Endothelial cell of umbilical vein (primary cell): ENCODE measurements at regions of chr10 and their contacts with region 1.

Region 1: GRCh38 chr10:60827791-60828488 is 49.7 kb downstream of the CDK1 start:
- DNase-seq: peak; percentile 98
- H3K4me3 ChIP-seq: peak overlapping the region in 1 of 3 experiments; percentile 39
- H3K27ac ChIP-seq: peak overlapping the region; percentile 98
- H3K4me1 ChIP-seq: peaks cover 32% of the 10 kb centered on the region
- H3K27me3 ChIP-seq: no peaks in the 10 kb centered on the region
- CTCF ChIP-seq: no peak
- POLR2A ChIP-seq: no peak

Region 2: DNA sequence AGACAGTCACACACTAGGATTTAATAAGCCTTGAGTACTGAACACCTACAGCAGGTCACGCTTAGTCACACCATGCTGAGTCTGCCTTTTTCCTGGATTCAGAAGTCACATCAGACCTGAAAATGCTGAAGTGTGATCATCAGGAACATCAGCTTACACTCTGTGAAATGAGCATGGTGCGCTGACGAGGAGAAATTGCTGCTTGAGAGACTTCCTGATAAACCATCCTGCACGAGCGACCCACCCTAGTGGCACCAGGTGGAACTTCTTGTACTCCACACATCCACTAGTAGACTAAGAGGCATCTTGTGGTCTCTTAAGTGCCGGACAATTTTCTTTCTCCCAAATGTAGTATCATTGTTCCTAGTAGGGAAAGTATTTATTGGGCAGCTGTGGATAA is 1022.9 kb before region 1 on chr10:
- CTCF ChIA-PET with region 1: no interaction called
- POLR2A ChIA-PET with region 1: no interaction called
- dilution Hi-C with region 1: no loop called
- intact Hi-C with region 1: no loop called
- DNase-seq: no peak
- H3K4me3 ChIP-seq: no peak overlapping the region
- H3K27ac ChIP-seq: no peak overlapping the region
- H3K4me1 ChIP-seq: no peaks in the 10 kb centered on the region
- H3K27me3 ChIP-seq: no peaks in the 10 kb centered on the region
- CTCF ChIP-seq: peak; percentile 38 to 40
- POLR2A ChIP-seq: no peak

Region 3: DNA sequence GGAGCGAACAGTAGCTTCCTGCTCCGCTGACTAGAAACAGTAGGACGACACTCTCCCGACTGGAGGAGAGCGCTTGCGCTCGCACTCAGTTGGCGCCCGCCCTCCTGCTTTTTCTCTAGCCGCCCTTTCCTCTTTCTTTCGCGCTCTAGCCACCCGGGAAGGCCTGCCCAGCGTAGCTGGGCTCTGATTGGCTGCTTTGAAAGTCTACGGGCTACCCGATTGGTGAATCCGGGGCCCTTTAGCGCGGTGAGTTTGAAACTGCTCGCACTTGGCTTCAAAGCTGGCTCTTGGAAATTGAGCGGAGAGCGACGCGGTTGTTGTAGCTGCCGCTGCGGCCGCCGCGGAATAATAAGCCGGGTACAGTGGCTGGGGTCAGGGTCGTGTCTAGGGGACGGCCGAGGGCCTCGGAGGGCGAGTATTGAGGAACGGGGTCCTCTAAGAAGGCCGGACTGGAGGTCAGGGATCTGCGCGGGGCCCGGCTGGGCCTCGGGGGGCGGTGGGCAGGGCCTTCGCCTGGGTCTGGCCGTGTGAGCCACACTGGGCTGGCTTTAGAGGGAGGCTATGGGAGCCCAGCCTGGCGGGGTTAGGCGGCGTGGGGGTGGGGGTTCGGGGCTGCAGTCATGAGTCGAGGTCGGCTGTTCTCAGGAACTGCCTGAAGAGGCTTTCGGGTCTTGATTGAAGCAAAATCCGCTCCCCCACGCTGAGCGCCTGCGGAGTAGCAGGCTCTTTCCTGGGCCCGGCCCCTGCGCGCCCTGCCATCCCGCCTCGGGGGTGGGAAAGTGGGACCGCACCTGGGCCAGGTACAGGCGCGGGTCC is 49.5 kb before region 1 on chr10 and contains the start of gene CDK1:
- CTCF ChIA-PET with region 1: no interaction called
- POLR2A ChIA-PET with region 1: no interaction called
- dilution Hi-C with region 1: no loop called
- intact Hi-C with region 1: loop called (anchors 1 kb)
- DNase-seq: peak; percentile 98
- H3K4me3 ChIP-seq: peak within 1 kb of the TSS; percentile 91 to 98 (median 92)
- H3K27ac ChIP-seq: peak within 1 kb of the TSS; percentile 64
- H3K4me1 ChIP-seq: peaks cover 37% of the 10 kb centered on the region
- H3K27me3 ChIP-seq: no peaks in the 10 kb centered on the region
- CTCF ChIP-seq: no peak
- POLR2A ChIP-seq: peak; percentile 75
- total RNA-seq, gene CDK1: 70.1 and 71.6 TPM in 2 replicates

Region 4: DNA sequence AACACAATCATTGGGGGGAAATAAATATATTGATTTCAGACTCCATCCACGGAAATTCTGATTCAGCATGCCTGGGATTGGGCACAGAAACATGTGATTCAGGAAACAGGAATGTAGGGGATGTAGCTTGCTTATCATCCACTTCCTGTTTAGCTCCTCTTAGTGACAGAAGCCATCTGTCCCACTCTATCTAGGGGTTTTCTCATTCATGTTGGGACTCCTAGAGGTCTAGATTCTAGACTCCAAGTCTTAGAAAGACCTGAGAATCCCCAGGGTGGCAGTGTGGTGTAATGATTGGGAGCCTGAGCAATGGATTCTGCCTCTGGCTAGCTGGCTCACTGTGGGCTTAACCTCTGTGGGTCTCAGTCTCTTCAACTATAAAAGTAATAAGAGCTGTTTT is 18.2 kb after region 1 on chr10:
- CTCF ChIA-PET with region 1: interaction called, 3 read pairs
- POLR2A ChIA-PET with region 1: no interaction called
- dilution Hi-C with region 1: no loop called
- intact Hi-C with region 1: loop called (anchors 1 kb)
- DNase-seq: peak; percentile 27
- H3K4me3 ChIP-seq: no peak overlapping the region
- H3K27ac ChIP-seq: peak overlapping the region; percentile 30
- H3K4me1 ChIP-seq: peaks cover 11% of the 10 kb centered on the region
- H3K27me3 ChIP-seq: no peaks in the 10 kb centered on the region
- CTCF ChIP-seq: no peak
- POLR2A ChIP-seq: no peak

Region 5: DNA sequence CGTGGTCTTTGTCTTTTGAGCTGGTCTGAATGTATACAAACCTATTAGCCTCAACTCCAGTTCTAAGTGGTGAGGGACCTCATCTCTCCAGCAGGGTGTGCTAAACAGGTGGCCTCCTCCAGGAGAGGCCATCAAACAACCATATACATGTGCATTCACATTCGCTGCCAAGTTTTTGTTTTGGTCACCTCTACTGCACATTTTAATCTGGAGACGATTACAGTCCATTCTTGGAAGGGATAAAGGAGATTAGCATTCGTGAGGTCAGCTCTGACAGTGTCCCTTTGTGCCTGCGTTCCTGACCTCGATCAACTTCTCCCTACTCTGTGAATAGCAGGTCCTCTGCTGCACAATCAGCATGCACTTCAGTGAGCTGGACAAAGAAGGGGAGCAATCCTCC is 55.2 kb after region 1 on chr10:
- CTCF ChIA-PET with region 1: interaction called, 3 read pairs
- POLR2A ChIA-PET with region 1: no interaction called
- dilution Hi-C with region 1: no loop called
- intact Hi-C with region 1: loop called (anchors 2 kb)
- DNase-seq: peak; percentile 61
- H3K4me3 ChIP-seq: no peak overlapping the region
- H3K27ac ChIP-seq: no peak overlapping the region
- H3K4me1 ChIP-seq: no peaks in the 10 kb centered on the region
- H3K27me3 ChIP-seq: no peaks in the 10 kb centered on the region
- CTCF ChIP-seq: peak; percentile 41 to 64
- POLR2A ChIP-seq: no peak

Region 6: GRCh38 chr10:60944159-60944909 is 116.4 kb after region 1 on chr10 and contains the start of gene RHOBTB1:
- CTCF ChIA-PET with region 1: no interaction called
- POLR2A ChIA-PET with region 1: interaction called, 3 read pairs
- dilution Hi-C with region 1: no loop called
- intact Hi-C with region 1: loop called (anchors 1 kb)
- DNase-seq: peak; percentile 85
- H3K4me3 ChIP-seq: peak within 1 kb of the TSS; percentile 74 to 91 (median 86)
- H3K27ac ChIP-seq: peak within 1 kb of the TSS; percentile 98
- H3K4me1 ChIP-seq: peaks cover 18% of the 10 kb centered on the region
- H3K27me3 ChIP-seq: no peaks in the 10 kb centered on the region
- CTCF ChIP-seq: no peak
- POLR2A ChIP-seq: peak; percentile 71
- total RNA-seq, gene RHOBTB1: 31.0 and 31.3 TPM in 2 replicates

Region 7: DNA sequence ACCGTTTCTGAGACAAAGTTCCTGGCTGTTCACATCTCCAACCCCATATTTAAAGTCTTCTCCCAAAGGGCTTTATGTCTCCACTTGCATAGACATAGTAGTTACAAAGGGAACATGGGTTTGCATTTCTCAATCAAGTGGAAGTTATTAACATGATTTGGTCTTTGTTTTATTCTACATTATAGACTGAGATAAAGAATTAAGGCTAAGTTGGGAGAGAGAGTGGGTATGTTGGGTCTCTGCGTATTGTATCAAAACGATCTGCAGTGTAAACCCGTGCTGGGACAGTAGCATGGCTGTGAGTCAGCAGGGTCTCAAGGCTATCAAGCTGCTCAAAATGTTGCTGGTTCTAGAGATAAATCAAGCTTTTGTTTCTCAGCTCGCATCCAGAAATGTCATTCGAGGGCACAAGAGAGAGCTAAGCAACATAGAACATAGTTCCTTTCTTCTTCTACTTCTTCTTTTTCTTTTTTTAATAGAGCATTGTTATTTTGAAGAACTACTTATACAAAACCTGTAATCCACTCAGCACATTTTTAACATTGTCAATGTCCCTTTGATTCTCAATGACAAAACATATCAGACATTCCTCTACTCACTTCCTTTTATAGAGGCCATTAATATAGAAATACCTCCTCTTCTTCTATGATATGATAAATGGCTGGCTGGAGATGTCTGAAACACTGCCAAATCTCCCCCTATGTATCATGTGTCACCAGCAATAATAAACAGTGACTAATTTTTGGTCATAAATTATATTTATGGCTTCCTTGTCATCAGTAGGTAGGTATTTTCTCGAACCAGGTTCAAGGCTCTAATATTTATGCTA is 150.6 kb after region 1 on chr10:
- CTCF ChIA-PET with region 1: no interaction called
- POLR2A ChIA-PET with region 1: no interaction called
- dilution Hi-C with region 1: no loop called
- intact Hi-C with region 1: loop called (anchors 1 kb)
- DNase-seq: peak; percentile 94
- H3K4me3 ChIP-seq: no peak overlapping the region
- H3K27ac ChIP-seq: peak overlapping the region; percentile 89
- H3K4me1 ChIP-seq: peaks cover 41% of the 10 kb centered on the region
- H3K27me3 ChIP-seq: no peaks in the 10 kb centered on the region
- CTCF ChIP-seq: no peak
- POLR2A ChIP-seq: no peak

Region 8: GRCh38 chr10:61621605-61622060 is 793.7 kb after region 1 on chr10:
- CTCF ChIA-PET with region 1: no interaction called
- POLR2A ChIA-PET with region 1: no interaction called
- dilution Hi-C with region 1: no loop called
- intact Hi-C with region 1: loop called (anchors 5 kb)
- DNase-seq: peak; percentile 78
- H3K4me3 ChIP-seq: peak overlapping the region in 2 of 3 experiments; percentile 7 to 47
- H3K27ac ChIP-seq: peak overlapping the region; percentile 48
- H3K4me1 ChIP-seq: peaks cover 27% of the 10 kb centered on the region
- H3K27me3 ChIP-seq: no peaks in the 10 kb centered on the region
- CTCF ChIP-seq: no peak
- POLR2A ChIP-seq: no peak